Heart right ventricle (tissue), 16 donors: ENCODE measurements at regions of chr11 and their contacts with region 1.

Region 1: GRCh38 chr11:115304774-115305472 is 199.3 kb downstream of the CADM1 start:
- DNase-seq: no peak
- ATAC-seq: no peak
- H3K4me3 ChIP-seq: no peak overlapping the region
- H3K27ac ChIP-seq: no peak overlapping the region
- H3K4me1 ChIP-seq: peaks cover 0 to 6% (median 0%) of the 10 kb centered on the region in 9 donors
- H3K27me3 ChIP-seq: no peaks in the 10 kb centered on the region
- CTCF ChIP-seq: no peak

Region 2: GRCh38 chr11:114664641-114665040 is 640.3 kb before region 1 on chr11:
- intact Hi-C with region 1: no loop called
- DNase-seq: no peak
- ATAC-seq: no peak
- H3K4me3 ChIP-seq: no peak overlapping the region
- H3K27ac ChIP-seq: no peak overlapping the region
- H3K4me1 ChIP-seq: no peaks in the 10 kb centered on the region
- H3K27me3 ChIP-seq: no peaks in the 10 kb centered on the region
- CTCF ChIP-seq: no peak

Region 3: DNA sequence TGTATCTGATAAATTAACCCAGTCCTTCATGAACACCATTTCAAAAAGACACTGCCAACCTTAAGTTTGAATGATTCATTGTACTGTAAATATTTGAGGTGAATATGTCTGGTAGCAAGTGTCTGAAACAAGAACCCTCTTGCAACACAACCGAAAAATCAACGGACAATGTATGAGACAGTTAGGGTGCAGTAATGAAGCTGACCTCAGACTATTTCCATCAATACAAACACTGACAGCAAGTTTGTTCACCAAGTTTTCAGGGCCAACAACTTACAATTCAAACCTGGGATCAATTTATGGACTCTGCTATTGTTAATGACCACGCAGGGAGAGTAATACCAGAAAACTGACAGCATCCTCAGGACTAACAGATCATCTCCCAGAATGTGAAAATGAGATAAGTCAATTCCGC is 73.0 kb after region 1 on chr11:
- intact Hi-C with region 1: loop called in 1 of 10 experiments (anchors 2 kb)
- DNase-seq: no peak
- ATAC-seq: no peak
- H3K4me3 ChIP-seq: no peak overlapping the region
- H3K27ac ChIP-seq: no peak overlapping the region
- H3K4me1 ChIP-seq: no peaks in the 10 kb centered on the region
- H3K27me3 ChIP-seq: no peaks in the 10 kb centered on the region
- CTCF ChIP-seq: no peak